Astrocyte of the cerebellum (primary cell): ENCODE measurements at regions of chrX and their contacts with region 1.

Region 1: GRCh38 chrX:40189637-40190036 is 91.9 kb upstream of the BCOR start:
- DNase-seq: no peak
- H3K4me3 ChIP-seq: no peak overlapping the region
- CTCF ChIP-seq: no peak

Region 2: DNA sequence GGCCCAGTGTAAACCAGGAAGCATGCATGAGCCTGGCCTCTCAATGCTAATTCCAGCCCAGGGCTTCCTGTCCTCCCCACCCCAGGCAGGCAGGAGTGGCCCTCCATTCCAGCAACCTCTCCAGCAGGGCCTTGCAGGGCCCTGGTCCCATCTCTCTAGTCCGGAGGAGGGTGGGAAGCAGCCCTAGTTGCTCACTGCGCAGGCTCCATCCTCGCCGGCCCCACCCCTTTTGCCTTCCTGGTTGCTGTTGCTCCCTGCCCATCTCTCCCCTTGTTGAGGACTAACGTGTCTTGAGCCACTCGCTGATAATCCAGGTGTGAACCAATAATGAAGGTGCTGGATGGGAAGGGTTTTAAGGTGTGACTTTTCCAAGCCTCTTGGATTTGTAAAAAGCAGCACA is 69.3 kb after region 1 on chrX:
- in situ Hi-C with region 1: loop called (anchors 5 kb)
- DNase-seq: no peak
- H3K4me3 ChIP-seq: no peak overlapping the region
- CTCF ChIP-seq: no peak